ENCODE measurements at regions of chr1 and their contacts with region 1.

Region 1: GRCh38 chr1:94926915-94927404 is at the start of gene CNN3:
- DNase-seq: peak; percentile 90 to 97
- H3K4me3 ChIP-seq: peak within 1 kb of the TSS; percentile 86 to 93
- H3K27ac ChIP-seq: peak within 1 kb of the TSS; percentile 99
- H3K4me1 ChIP-seq: peaks cover 0 to 59% (median 39%) of the 10 kb centered on the region in 4 donors
- H3K27me3 ChIP-seq: no peaks in the 10 kb centered on the region
- CTCF ChIP-seq: no peak

Region 2: DNA sequence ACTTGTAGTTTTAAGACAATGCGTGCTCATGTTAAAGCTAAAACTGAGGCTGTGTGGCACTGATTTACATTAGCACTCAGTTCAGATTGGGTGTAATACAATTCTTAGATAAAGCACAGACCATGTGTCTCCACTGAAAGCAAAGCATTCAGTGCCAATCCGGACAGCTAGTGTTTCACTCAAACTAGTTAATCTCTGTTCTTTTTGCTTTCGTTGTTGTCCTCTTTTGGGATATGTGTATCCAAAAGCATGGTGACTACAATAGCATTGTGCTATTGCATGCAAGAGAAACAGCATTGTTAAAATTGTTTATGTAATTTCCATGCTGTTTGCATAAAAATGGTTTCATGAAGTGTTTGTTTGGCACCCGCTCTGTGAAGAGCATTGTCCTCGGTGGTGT is 440.0 kb before region 1 on chr1:
- intact Hi-C with region 1: no loop called
- DNase-seq: no peak
- H3K4me3 ChIP-seq: no peak overlapping the region
- H3K27ac ChIP-seq: no peak overlapping the region
- H3K4me1 ChIP-seq: no peaks in the 10 kb centered on the region
- H3K27me3 ChIP-seq: no peaks in the 10 kb centered on the region
- CTCF ChIP-seq: no peak

Region 3: DNA sequence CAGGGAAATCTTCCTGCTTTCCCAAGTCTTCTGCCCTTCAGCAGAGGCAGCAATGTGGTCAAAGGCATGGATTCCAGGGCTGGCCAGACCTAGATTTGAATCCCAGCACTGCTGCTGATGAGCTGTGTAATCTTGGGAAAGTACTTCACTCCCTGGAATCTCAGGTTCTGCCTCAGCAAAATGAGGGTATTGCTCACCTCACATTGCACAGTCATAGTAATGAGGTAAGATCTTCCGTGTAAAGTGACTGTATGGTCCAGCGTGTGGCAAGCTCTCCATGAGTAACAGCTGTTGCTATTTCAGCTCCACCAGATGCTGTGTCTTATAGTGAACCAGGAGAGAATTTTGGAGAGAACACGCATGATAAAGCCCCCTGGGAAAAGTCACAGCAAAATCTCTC is 329.3 kb before region 1 on chr1:
- intact Hi-C with region 1: no loop called
- DNase-seq: no peak
- H3K4me3 ChIP-seq: no peak overlapping the region
- H3K27ac ChIP-seq: no peak overlapping the region
- H3K4me1 ChIP-seq: peaks cover 0 to 4% (median 2%) of the 10 kb centered on the region in 4 donors
- H3K27me3 ChIP-seq: no peaks in the 10 kb centered on the region
- CTCF ChIP-seq: no peak

Region 4: DNA sequence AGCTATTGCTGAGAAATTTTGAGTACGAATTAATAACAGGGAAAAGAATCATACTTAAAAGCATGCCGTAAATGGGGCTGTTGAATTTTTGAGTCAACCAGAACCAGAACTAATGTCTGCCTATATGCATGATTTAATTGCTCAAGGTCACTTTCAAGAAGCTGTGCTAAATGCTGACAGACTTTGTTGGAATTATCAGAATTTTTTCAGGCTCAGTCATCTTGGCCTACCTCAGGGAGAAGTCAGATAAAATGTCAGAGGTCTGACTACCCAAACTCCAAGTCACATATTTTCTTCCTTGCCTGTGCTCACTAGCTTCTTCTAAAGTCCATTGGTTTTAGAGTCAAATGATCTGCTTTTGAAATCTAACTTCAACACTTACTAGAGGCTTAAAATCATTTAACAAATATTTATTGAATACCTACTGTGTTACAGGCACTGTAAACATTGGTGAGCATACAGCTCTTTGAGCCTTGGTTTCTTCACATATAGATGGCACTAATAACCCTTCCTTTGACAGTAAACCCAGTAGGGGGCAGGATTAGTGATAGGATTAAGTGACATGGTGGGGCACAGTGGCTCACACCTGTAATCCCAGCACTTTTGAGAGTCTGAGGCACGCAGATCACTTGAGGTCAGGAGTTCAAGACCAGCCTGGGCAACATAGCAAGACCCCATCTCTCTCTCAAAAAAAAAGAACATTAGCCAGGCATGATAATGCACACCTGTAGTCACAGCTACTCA is 228.0 kb before region 1 on chr1:
- intact Hi-C with region 1: no loop called
- DNase-seq: no peak
- H3K4me3 ChIP-seq: no peak overlapping the region
- H3K27ac ChIP-seq: peak overlapping the region in 1 of 2 donors; percentile 17
- H3K4me1 ChIP-seq: peaks cover 0 to 4% (median 0%) of the 10 kb centered on the region in 4 donors
- H3K27me3 ChIP-seq: no peaks in the 10 kb centered on the region
- CTCF ChIP-seq: no peak

Region 5: DNA sequence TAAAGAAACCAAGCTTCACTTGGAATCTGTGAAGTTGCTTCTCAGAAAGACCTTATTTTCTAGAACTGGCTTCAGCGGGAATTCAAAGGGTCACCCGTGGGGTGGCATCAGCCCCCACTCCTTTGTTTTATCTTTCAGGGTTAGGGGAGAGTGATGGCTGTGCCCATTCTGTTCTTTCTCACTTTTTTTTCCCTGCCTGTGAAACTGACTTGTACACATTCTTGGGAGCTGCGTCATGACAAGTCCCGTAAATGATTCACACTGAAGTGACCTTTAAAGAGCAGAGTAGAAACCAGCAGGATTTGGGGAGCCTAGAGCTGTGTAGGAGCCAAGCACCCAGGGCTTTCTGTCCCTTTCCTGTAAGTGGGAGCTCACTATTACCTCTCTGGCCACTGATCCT is 63.0 kb before region 1 on chr1:
- intact Hi-C with region 1: loop called (anchors 2 kb)
- DNase-seq: peak; percentile 72 to 75
- H3K4me3 ChIP-seq: peak overlapping the region in 1 of 2 donors; percentile 4
- H3K27ac ChIP-seq: peak overlapping the region; percentile 76 to 81
- H3K4me1 ChIP-seq: peaks cover 0 to 61% (median 48%) of the 10 kb centered on the region in 4 donors
- H3K27me3 ChIP-seq: no peaks in the 10 kb centered on the region
- CTCF ChIP-seq: no peak

Region 6: DNA sequence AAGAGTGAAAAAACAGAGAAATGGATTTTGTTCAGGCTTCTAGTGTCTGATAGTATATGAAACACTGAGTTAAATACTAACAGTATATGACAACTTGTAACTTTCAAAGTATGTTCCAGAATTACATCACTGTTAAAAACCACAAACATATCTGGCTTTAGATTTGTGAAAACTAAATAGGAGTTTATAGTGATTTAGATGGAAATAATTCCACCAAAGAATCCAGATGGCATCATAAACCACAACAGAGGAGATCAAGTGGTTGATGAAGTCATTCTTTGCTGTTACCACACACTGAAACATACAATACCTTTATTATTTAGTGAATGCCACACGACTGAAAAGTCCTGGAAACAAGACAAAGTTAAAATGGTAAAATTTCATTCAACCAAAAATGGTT is 108.6 kb after region 1 on chr1:
- intact Hi-C with region 1: loop called (anchors 5 kb)
- DNase-seq: no peak
- H3K4me3 ChIP-seq: no peak overlapping the region
- H3K27ac ChIP-seq: no peak overlapping the region
- H3K4me1 ChIP-seq: no peaks in the 10 kb centered on the region
- H3K27me3 ChIP-seq: no peaks in the 10 kb centered on the region
- CTCF ChIP-seq: no peak

Region 7: DNA sequence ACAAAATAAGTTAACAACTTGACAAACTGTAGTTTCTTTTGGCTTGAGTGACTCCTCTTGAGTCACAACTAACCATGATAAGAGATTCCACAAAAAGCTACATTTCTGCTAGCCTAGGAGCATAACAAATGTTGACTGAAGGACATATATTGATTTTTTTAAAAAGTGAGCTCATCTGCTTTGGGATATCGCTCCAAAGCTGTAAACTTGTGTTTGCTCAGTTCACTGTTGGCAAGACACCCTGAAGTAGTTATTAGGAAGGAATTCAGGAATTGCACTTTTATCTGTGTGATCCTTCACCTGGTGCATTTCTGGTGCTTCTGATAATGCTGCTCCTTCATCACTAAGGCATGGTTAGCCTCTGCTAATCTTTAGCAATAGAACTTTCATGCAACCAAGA is 330.8 kb after region 1 on chr1:
- intact Hi-C with region 1: no loop called
- DNase-seq: no peak
- H3K4me3 ChIP-seq: no peak overlapping the region
- H3K27ac ChIP-seq: no peak overlapping the region
- H3K4me1 ChIP-seq: no peaks in the 10 kb centered on the region
- H3K27me3 ChIP-seq: no peaks in the 10 kb centered on the region
- CTCF ChIP-seq: no peak

Measured in tibial artery (tissue), 4 donors.